Ascending aorta (tissue), 2 donors: ENCODE measurements at regions of chr13 and their contacts with region 1.

Region 1: DNA sequence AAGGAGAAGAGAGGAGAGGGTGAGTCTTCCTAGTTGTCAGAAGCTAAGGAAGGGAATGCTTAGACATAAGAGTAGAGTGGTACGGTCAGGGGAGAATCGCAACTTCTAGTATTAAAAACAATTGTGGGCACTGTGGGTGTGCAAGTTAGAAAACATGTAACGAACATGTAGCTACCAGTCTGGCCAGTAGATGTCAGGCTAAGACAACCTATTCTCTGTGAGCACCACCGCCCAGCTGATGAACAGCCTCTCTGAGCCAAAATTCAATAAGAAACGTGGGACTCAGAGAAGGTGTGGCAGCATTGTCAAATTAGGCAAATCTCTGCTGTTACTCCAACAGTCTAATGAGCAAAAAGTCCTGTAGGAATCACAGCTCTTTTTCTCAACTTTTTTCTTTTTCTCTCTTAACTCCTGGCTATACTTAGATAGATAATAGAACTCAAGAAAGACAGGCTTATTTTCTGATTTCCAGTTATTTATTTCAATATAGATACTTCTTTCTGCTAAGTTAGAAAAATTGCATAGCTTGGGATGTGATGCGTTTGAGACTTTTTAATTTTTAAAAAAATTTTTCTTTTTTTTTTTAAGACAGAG is 186.2 kb downstream of the USP12 start:
- DNase-seq: peak in 1 of 2 donors; percentile 88
- H3K4me3 ChIP-seq: no peak overlapping the region
- H3K27ac ChIP-seq: peak overlapping the region in 1 of 2 donors; percentile 69
- H3K4me1 ChIP-seq: peaks cover 5 to 19% of the 10 kb centered on the region in 2 donors
- H3K27me3 ChIP-seq: no peaks in the 10 kb centered on the region
- CTCF ChIP-seq: peak; percentile 74 to 86 (median 77)

Region 2: DNA sequence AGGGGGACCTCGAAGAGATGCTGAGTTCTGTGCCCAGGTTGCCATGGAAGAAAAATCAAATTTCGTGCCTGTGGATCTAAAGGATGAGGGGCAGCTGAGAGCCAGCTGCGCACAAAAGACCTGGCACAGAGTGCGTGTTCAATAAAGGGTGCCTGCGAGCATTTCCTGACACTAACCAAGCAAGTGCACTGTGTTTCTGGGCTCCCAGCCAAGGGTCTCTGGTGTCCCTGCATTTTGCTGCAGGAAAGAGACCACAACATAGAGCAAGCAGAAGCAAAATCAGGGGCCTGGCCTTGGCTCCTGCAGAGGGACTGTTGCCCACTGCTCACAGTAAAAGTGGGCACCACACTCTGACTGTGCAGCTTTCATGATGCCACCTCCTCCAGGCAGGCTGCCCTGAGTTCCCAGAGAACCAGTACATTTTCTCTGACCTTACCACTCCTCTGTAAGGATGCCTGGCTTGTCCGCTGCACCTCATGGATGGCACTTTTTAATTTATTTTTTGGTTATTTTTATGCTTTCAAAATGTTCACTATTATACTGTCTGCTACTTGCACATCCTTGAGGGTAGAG is 154.0 kb before region 1 on chr13:
- intact Hi-C with region 1: no loop called
- DNase-seq: peak in 1 of 2 donors; percentile 41
- H3K4me3 ChIP-seq: no peak overlapping the region
- H3K27ac ChIP-seq: no peak overlapping the region
- H3K4me1 ChIP-seq: no peaks in the 10 kb centered on the region
- H3K27me3 ChIP-seq: no peaks in the 10 kb centered on the region
- CTCF ChIP-seq: no peak

Region 3: GRCh38 chr13:26946684-26947343 is 38.6 kb before region 1 on chr13:
- intact Hi-C with region 1: loop called (anchors 5 kb)
- DNase-seq: no peak
- H3K4me3 ChIP-seq: no peak overlapping the region
- H3K27ac ChIP-seq: no peak overlapping the region
- H3K4me1 ChIP-seq: no peaks in the 10 kb centered on the region
- H3K27me3 ChIP-seq: no peaks in the 10 kb centered on the region
- CTCF ChIP-seq: peak; percentile 62 to 70 (median 66)

Region 4: DNA sequence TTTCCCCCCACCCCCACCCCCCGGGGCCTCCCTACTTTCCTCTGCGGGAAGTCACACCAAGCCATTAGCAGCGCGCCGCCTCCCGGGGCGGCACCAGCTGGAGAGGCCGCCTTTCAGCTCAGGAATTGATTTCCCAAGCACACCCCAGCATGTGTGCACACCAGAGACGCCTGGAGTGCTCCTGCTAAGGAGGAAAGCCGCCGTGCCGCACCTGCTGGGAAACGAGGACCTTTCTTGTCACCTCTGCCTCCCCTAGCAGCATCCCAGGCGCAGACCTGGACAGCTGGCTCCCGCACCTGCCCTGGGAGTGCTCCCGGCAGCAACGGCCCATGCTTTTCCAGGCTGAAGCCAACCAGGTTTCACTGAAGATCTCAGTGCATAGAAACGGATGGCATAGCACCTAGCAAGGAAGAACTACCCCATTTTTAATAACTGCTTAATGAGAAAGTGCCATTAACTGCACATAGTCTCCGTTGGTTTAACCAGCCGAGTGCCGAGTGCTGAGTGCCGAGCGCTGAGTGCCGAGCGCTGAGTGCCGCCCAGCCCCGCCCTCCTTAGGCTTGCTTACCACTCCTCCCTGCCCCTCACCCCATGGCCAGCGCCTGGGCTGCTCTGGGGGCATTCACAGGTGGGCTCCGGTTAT is 21.3 kb after region 1 on chr13:
- intact Hi-C with region 1: no loop called
- DNase-seq: no peak
- H3K4me3 ChIP-seq: peak overlapping the region; percentile 43 to 65
- H3K27ac ChIP-seq: no peak overlapping the region
- H3K4me1 ChIP-seq: no peaks in the 10 kb centered on the region
- H3K27me3 ChIP-seq: no peaks in the 10 kb centered on the region
- CTCF ChIP-seq: no peak

Region 5: DNA sequence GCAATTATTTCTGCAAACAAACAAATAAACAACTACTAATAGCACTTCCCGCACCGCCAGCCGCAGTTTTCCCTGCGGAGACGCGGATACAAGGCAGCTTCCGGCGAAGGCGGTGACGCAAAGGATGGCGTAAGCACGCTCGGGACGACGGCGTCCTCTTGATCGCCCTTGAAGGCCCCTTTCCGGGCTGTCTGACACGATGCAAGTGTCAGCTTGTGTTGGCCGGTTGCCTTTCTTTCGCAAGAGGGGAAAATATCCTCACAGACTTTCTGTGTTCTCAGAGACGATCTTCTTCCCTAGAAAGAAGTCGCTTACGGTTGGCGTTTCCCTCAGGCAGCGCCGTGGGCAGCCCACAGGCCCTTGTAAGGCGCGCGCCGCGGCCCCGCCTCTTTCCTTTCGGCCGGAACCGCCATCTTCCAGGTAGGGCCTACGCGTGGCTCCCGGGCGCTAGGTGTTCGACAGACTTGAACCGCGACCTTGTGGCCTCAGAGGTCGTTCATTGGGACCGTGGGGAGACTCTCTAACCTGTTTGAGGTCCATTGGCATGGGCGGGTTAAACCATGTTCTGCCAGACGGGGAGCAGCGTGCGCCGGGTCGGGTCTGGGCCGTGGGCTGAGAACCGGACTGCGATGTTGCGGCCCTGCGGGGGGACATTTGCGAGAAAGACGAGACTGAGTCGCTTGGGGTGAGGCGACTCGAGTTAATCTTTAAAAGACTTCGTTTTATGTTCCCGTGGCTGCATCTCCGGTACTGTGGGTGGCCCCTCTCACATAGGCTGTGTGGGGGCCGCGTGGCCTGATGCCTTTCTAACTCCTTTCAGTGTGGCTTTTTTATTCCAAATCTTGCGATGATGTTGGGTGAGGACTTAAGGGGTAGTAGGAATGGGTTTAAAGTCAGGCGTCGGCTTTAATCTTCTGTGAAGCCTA is 266.0 kb after region 1 on chr13 and contains the start of gene RPL21:
- intact Hi-C with region 1: loop called (anchors 1 kb)
- DNase-seq: peak; percentile 81 to 98
- H3K4me3 ChIP-seq: peak within 1 kb of the TSS; percentile 82 to 93
- H3K27ac ChIP-seq: peak within 1 kb of the TSS; percentile 91 to 97
- H3K4me1 ChIP-seq: peaks cover 5 to 17% of the 10 kb centered on the region in 2 donors
- H3K27me3 ChIP-seq: no peaks in the 10 kb centered on the region
- CTCF ChIP-seq: no peak
- total RNA-seq, gene RPL21: 377 TPM

Region 6: DNA sequence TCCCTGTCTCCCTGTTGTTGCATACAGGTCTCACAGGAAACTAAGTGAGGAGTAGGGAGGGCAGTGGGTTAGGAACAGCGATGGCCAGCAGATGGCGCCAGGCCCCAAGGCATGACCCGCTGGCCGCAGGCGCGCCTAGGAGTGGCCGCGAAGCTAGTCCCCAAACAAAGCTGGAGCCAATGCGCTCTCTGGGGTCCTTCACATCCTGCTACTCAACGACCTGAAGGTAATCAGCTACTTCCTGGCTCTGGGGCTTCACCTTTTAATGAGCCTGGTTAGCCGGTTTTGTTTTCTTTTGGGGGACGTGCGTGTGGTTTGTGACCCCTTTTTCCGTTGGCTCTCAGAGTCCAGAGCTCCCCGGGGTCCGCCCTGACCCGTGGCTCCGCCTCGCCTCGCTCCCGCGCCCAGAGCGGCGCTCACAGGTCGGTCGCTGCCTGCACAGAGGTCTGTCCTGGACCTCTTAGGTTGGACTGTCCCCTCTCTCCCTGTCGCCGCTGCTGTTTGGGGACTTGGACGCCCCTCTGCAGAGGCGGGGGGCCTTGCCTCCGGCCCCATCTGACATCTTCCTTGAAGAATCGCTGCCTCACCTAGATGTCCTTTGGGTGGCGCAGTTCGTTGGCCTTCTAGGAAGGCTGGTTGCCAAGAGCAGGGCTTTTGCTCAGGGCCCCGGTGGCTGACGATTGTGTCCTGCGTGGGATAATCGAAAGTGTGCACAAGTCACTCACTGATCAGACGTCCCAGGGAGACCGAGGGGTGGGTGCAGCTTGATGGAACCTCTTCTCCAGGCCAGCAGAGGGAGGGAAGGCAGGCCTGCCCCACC is 376.9 kb after region 1 on chr13:
- intact Hi-C with region 1: loop called (anchors 1 kb)
- DNase-seq: peak; percentile 24 to 89
- H3K4me3 ChIP-seq: peak overlapping the region; percentile 58 to 60
- H3K27ac ChIP-seq: no peak overlapping the region
- H3K4me1 ChIP-seq: peaks cover 0 to 6% of the 10 kb centered on the region in 2 donors
- H3K27me3 ChIP-seq: no peaks in the 10 kb centered on the region
- CTCF ChIP-seq: peak; percentile 79 to 94 (median 88)

Region 7: DNA sequence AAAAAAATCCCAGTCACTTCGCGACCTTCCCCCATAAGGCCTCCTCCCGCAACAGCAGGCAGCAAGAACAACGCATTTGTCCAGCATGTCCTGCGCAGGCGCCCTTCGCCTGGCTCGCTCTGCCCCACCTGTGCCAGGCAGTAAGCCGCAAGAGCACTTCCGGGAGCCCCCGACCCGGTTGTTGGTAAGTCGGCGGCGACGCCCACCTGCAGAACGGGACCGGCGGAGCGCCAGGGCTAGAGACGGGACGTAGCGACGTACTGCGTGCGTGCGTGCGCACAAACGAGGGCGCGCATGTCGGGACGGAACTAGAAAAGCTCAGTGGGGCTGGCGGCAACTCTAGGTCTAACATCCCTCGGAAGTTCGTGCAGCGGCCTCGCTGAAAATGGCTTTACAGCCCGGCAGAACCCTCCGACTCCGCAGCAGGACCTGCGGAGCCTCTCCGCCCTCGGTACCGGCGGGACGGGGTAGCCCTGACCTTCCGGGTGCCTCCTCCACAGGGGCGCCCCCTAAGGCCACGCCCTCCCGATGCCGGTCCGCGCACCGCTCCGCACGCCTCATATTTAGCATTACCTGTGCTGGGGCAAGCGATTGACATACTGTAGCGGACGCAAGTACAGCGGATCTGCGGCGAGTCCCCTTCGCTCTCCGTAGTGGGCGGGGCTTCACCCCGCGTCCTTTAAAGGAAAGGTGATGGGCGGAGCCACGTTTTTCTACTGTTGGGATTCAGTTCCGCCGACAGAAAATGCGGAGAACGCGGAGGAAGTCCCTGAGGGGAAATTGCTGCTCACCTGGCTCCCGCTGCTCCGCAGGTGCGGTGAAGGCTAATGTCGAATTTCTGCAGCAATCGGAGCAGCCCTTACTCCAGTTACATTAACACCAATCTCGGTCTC is 464.8 kb after region 1 on chr13 and contains the start of gene MTIF3:
- intact Hi-C with region 1: loop called (anchors 10 kb)
- DNase-seq: peak; percentile 79 to 96
- H3K4me3 ChIP-seq: peak within 1 kb of the TSS; percentile 93 to 99
- H3K27ac ChIP-seq: peak within 1 kb of the TSS; percentile 96 to 97
- H3K4me1 ChIP-seq: peaks cover 3 to 15% of the 10 kb centered on the region in 2 donors
- H3K27me3 ChIP-seq: no peaks in the 10 kb centered on the region
- CTCF ChIP-seq: peak in 2 of 3 experiments; percentile 2 to 8
- total RNA-seq, gene MTIF3: 23.6 TPM

Region 8: GRCh38 chr13:27826379-27827353 is 841.3 kb after region 1 on chr13:
- intact Hi-C with region 1: loop called (anchors 2 kb)
- DNase-seq: peak in 1 of 2 donors; percentile 87
- H3K4me3 ChIP-seq: peak overlapping the region in 1 of 2 donors; percentile 51
- H3K27ac ChIP-seq: no peak overlapping the region
- H3K4me1 ChIP-seq: peaks cover 0 to 5% of the 10 kb centered on the region in 2 donors
- H3K27me3 ChIP-seq: no peaks in the 10 kb centered on the region
- CTCF ChIP-seq: peak; percentile 77 to 92 (median 87)

Region 9: DNA sequence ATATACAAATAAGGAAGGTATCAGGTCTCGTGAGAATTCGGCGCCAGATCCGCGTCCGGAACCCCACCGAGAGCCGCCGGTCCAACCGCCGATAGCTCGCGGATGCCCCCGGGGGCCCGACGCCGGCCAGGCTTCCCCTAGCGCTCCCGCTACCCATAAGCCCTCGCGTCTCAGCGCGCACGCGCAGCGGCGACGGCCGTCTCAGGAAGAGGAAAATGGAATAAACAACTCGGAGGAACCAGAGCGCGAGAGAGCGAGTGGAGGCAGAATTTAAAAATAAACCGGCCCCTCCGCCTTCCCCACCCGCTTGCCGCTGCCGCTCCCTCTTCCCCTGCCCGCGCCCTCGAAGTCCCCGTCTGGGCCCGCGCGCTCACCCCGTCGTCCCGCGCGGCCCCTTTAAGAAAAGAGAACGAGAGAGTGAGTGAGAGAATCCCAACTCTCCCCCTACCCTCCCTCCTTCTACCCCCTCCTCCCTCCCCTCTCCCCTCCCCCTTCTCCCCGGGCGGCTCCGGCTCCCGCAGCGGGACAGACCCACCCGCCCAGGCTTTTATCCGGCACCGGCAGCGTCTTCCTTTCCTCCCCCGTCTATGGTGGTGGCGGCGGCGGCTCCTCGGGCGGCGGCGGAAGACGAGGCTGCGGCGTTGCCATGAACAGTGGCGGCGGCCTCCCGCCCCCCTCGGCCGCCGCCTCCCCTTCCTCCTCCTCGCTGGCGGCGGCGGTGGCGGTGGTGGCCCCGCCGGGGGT is 1152.8 kb after region 1 on chr13 and contains the start of gene PAN3:
- intact Hi-C with region 1: loop called (anchors 10 kb)
- DNase-seq: peak; percentile 72 to 96
- H3K4me3 ChIP-seq: peak within 1 kb of the TSS; percentile 81 to 95
- H3K27ac ChIP-seq: peak within 1 kb of the TSS; percentile 90 to 100
- H3K4me1 ChIP-seq: peaks cover 0 to 16% of the 10 kb centered on the region in 2 donors
- H3K27me3 ChIP-seq: no peaks in the 10 kb centered on the region
- CTCF ChIP-seq: peak in 1 of 3 experiments; percentile 10
- total RNA-seq, gene PAN3: 34.5 TPM